Activated CD4-positive, alpha-beta T cell treated with anti-CD3 and anti-CD28 coated beads for 36 hours (primary cell): ENCODE measurements at regions of chr14 and their contacts with region 1.

Region 1: DNA sequence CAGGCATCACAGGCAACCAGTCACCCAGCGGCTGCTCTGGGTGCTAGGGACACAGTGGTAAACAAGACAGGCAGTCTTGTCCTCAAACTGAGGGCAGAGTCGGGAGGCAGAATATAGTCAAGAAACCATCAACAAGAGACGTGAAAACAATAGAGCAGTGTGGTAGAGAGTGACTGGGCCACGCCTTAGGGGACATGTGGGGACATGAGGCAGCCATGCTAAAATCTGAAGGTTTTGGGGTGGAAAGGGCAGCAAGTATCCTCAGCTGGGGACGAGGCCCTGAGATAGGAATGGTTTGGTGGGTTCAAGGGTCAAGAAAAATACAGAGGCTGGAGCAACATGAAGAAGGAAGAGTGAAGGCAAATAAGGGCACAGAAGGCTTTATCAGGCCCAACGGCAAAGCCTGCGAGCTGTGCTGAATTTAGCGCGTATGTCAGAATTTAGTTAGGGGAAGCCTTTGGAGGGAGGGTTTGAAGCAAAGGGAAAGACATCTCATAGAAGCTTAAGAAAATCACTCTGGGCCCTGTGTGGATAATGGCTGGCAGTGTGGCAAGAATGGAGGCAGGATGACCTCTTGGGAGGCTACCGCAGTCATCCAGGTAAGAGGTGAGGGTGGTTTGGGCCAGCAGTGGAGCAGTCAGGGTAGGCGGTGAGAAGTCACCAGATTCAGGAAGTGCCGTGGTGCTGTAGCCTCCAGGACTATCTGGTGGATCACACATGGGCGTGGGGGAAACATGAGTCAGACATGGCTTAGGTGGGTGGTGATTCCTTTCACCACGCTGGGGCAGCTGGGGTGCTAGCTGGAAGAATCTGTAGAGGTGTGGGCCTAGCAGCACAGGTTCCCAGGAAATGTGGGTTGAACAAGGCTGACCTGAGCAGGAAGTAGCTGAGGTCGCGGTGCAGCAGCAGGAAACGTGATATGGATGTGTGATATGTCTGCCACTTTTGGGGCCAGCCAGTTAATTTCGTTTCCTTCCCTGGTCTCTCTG is 3.0 kb downstream of the EVL start:
- DNase-seq: peak; percentile 93
- ATAC-seq: peak; percentile 38
- H3K4me3 Mint-ChIP-seq: peak overlapping the region; percentile 75
- H3K27ac Mint-ChIP-seq: peak overlapping the region; percentile 99
- H3K4me1 Mint-ChIP-seq: peaks cover 64% of the 10 kb centered on the region
- H3K27me3 Mint-ChIP-seq: no peaks in the 10 kb centered on the region

Region 2: GRCh38 chr14:98167705-98168104 is 1900.6 kb before region 1 on chr14:
- CTCF ChIA-PET with region 1: no interaction called
- POLR2A ChIA-PET with region 1: no interaction called
- intact Hi-C with region 1: loop called in 1 of 2 experiments (anchors 10 kb)
- DNase-seq: peak; percentile 50
- ATAC-seq: no peak
- H3K4me3 Mint-ChIP-seq: peak overlapping the region; percentile 31
- H3K27ac Mint-ChIP-seq: peak overlapping the region; percentile 99
- H3K4me1 Mint-ChIP-seq: peaks cover 92% of the 10 kb centered on the region
- H3K27me3 Mint-ChIP-seq: no peaks in the 10 kb centered on the region

Region 3: DNA sequence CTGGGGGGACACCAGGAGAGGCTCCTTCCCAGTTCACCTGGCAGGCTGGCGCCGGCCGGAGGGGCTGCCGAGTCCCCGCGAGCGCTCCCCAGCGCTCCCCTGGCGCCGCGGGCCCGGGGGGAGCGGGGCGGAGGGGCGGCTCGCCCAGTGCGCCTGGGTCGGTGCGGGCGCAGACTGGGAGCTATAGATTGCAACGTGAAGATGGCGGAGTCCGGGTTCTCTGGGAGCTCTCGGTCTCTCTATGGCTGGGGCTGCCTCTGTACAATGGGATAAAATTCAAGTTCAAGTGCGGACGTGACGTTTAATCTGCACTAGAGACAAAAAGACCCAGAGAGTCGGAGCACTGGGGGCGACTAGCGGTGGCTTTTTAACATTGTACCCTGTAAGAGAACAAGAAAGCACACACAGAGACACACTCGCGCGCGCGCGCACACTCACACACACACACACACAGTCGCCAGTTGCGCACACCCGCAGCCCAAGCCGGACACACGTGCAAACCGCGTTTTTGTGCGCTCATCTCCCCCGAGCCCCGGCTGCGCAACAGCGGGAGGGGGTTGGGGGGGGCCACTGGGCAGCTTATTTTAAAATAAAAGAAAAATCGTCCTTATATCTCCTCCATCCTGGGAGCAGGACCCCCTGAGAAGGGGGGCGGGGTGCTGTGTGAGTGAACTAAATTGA is 796.2 kb before region 1 on chr14 and contains the start of gene BCL11B:
- CTCF ChIA-PET with region 1: no interaction called
- POLR2A ChIA-PET with region 1: no interaction called
- intact Hi-C with region 1: loop called in 1 of 2 experiments (anchors 5 kb)
- DNase-seq: peak; percentile 95
- ATAC-seq: peak; percentile 76
- H3K4me3 Mint-ChIP-seq: peak within 1 kb of the TSS; percentile 87
- H3K27ac Mint-ChIP-seq: peak within 1 kb of the TSS; percentile 98
- H3K4me1 Mint-ChIP-seq: peaks cover 32% of the 10 kb centered on the region
- H3K27me3 Mint-ChIP-seq: peaks cover 2% of the 10 kb centered on the region
- total RNA-seq, gene BCL11B: 62.1 to 66.2 TPM

Region 4: GRCh38 chr14:99971087-99971940 is 97.0 kb before region 1 on chr14:
- CTCF ChIA-PET with region 1: no interaction called
- POLR2A ChIA-PET with region 1: interaction called, 18 read pairs
- intact Hi-C with region 1: loop called in 1 of 2 experiments (anchors 2 kb)
- DNase-seq: peak; percentile 93
- ATAC-seq: peak; percentile 87
- H3K4me3 Mint-ChIP-seq: peak overlapping the region; percentile 98
- H3K27ac Mint-ChIP-seq: no peak overlapping the region
- H3K4me1 Mint-ChIP-seq: peaks cover 21% of the 10 kb centered on the region
- H3K27me3 Mint-ChIP-seq: peaks cover 21% of the 10 kb centered on the region

Region 5: DNA sequence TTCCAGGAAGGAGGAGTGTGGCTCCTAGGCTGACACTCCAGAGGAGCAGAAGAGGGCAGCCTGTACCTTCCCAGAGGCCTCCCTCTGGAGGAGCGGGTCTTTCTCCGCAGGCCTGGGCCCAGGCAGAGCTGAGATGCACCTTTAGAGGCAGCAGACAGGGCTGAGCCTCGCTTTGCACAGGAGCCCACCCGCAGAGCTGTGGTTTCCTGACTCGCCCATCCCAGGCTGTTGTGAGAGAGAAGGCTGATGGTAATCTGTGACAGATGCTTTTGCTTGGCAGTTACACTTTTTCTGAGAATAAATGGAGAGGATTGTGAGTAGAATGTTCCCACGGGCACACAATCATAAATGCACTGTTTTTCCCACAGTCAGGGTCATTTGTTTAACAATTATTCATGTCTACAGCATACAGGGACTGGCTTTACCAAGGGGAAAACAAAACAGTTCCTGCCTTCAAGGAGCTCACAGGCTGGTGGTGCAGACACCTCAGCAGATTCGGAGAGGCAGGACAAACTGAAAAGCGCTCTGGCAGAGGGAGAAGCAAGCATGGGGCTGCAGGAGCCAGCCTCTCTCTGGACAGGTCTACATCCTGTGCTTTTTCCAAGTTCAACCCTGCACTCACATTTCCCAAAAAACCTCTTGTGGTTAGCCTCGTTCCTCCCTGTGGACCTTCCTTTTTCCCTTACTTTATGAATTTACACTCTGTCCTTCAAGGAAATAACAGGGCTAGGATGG is 10.9 kb after region 1 on chr14:
- CTCF ChIA-PET with region 1: interaction called, 231 read pairs
- POLR2A ChIA-PET with region 1: interaction called, 74 read pairs
- intact Hi-C with region 1: loop called in 1 of 2 experiments (anchors 1 kb)
- DNase-seq: peak; percentile 87
- ATAC-seq: peak; percentile 50
- H3K4me3 Mint-ChIP-seq: peak overlapping the region; percentile 57
- H3K27ac Mint-ChIP-seq: peak overlapping the region; percentile 91
- H3K4me1 Mint-ChIP-seq: peaks cover 97% of the 10 kb centered on the region
- H3K27me3 Mint-ChIP-seq: no peaks in the 10 kb centered on the region

Region 6: GRCh38 chr14:100192672-100193416 is 124.6 kb after region 1 on chr14:
- CTCF ChIA-PET with region 1: interaction called, 31 read pairs
- POLR2A ChIA-PET with region 1: interaction called, 3 read pairs
- intact Hi-C with region 1: loop called (anchors 1 to 2 kb)
- DNase-seq: peak; percentile 100
- ATAC-seq: peak; percentile 100
- H3K4me3 Mint-ChIP-seq: peak overlapping the region; percentile 70
- H3K27ac Mint-ChIP-seq: peak overlapping the region; percentile 92
- H3K4me1 Mint-ChIP-seq: peaks cover 13% of the 10 kb centered on the region
- H3K27me3 Mint-ChIP-seq: no peaks in the 10 kb centered on the region